WTC11 (cell line): ENCODE measurements at regions of chr1 and their contacts with region 1.

Region 1: DNA sequence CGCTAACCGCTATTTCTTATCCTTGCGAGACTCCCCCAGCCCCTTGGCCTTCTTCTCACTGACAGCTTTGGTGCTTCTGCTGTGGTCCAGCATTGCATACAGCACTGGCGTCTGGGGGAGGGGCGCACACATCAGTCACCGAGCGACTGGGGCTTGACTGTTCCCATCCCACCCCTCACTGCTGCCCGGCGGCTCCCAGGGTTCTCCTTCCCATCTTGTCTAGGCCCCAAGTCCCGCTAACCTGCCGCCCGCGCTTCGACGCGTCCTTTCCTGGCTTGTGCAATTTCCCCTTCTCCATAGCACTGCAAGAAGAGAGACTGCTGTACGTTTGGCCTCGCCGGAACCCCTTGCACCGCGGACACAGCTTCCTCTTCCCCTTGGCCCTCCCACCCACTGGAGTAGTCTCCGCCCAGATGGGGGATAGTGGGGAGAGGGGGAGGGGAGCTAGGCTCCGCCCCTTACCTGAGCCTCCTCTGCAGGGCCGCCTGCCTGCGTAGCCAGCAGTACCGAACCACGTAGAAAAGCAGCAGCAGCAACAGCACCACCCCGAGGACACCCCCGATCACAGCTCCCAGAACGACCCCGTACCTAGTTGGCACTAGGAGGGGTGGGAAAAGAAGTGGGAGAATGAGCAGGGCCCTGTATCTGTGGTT is 3.8 kb downstream of the MPZ start:
- DNase-seq: peak; percentile 98
- ATAC-seq: peak; percentile 97
- H3K4me3 Mint-ChIP-seq: peak overlapping the region; percentile 99
- H3K27ac Mint-ChIP-seq: peak overlapping the region; percentile 89
- H3K4me1 Mint-ChIP-seq: peaks cover 45% of the 10 kb centered on the region
- H3K27me3 Mint-ChIP-seq: no peaks in the 10 kb centered on the region
- CTCF ChIP-seq: no peak

Region 2: GRCh38 chr1:161059293-161059692 is 246.7 kb before region 1 on chr1:
- CTCF ChIA-PET with region 1: no interaction called
- POLR2A ChIA-PET with region 1: no interaction called
- DNase-seq: no peak
- ATAC-seq: no peak
- H3K4me3 Mint-ChIP-seq: no peak overlapping the region
- H3K27ac Mint-ChIP-seq: no peak overlapping the region
- H3K4me1 Mint-ChIP-seq: peaks cover 15% of the 10 kb centered on the region
- H3K27me3 Mint-ChIP-seq: no peaks in the 10 kb centered on the region
- CTCF ChIP-seq: no peak

Region 3: DNA sequence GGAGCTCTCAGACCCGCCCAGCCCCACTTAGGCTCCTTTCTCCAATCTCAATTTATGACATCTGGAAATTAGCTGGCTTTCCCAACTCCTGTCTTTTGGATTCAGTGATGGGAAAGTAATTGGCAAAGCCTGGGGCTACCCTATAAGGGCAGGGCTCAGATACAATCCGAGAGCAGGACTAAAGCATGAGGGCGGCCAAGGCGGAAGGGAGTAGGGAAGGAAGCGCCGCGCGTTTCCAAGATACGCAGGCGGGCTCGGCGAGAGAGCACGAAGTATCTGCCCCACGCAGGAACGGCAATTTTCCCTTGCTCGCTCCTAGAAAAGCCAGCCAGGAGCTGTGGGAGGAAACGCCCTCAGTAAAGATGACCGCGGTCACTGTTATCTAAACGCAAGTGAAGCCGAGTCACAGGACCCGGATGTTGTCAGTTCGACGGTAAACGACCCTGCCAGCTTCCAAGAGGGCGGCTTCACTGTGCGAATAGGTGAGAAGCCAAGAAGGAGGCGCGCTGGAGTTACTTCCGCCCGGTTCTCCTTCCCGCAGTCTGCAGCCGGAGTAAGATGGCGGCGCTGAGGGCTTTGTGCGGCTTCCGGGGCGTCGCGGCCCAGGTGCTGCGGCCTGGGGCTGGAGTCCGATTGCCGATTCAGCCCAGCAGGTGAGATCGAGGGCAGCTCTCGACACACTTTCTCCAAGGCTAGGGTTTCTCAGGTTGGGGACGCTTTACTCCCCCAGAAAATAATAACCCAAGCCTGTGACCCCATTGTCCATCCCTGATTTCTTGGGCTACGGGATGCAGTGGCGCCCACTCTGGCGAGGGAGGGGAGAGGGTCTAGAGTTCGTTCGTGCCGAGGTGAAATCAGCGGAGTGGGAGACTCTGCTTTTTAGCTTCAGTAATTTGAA is 103.9 kb before region 1 on chr1 and contains the start of gene NDUFS2:
- CTCF ChIA-PET with region 1: interaction called, 19 read pairs
- POLR2A ChIA-PET with region 1: interaction called, 5 read pairs
- DNase-seq: peak; percentile 97
- ATAC-seq: peak; percentile 80
- H3K4me3 Mint-ChIP-seq: peak within 1 kb of the TSS; percentile 91
- H3K27ac Mint-ChIP-seq: peak within 1 kb of the TSS; percentile 96
- H3K4me1 Mint-ChIP-seq: peaks cover 59% of the 10 kb centered on the region
- H3K27me3 Mint-ChIP-seq: no peaks in the 10 kb centered on the region
- CTCF ChIP-seq: no peak
- total RNA-seq, gene NDUFS2: 105 to 108 TPM (median 105 TPM) in 3 replicates

Region 4: GRCh38 chr1:161258439-161259344 is 47.3 kb before region 1 on chr1 and contains the start of gene PCP4L1:
- CTCF ChIA-PET with region 1: interaction called, 14 read pairs
- POLR2A ChIA-PET with region 1: interaction called, 6 read pairs
- DNase-seq: peak; percentile 87
- ATAC-seq: peak; percentile 97
- H3K4me3 Mint-ChIP-seq: peak within 1 kb of the TSS; percentile 65
- H3K27ac Mint-ChIP-seq: no peak within 1 kb of the TSS
- H3K4me1 Mint-ChIP-seq: peaks cover 22% of the 10 kb centered on the region
- H3K27me3 Mint-ChIP-seq: peaks cover 70% of the 10 kb centered on the region
- CTCF ChIP-seq: no peak
- total RNA-seq, gene PCP4L1: 0.92 to 1.2 TPM (median 1.1 TPM) in 3 replicates

Region 5: DNA sequence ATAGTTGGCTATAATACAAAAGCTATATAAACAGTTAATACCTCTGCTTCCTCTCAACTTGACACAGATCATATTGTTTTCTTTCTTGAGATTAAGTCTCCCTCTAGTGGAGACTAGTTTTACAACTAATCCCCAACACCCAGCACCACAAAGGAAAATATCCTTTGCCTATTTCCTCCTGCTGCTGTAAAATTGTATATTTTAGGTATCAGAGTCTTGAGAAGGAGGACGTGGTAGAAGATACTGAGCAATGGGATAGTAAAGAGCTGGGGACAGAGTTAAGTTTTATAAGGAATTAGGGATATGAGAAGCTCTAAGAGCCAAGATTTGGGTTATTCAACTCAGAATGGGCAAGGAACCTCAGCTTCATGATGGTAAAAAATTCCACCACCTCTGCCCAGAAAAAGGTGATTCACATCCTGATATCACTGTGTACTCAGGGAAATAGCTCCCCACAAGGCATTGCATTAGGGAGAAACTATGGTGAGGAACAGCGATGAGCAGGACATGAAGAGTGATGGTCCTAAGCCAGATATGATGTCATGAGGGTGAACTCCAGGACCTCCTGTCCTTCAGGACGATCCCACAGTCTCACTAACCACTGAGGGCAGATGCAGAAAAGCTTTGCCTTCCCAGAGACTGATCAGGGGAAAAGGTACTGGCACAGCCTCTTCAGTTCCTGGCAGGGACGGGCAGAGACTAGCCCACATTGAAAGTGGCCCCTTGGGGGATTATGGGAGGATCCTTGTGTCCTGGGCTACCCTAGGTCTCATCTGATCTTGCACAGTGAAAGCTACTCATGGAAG is 76.4 kb after region 1 on chr1:
- CTCF ChIA-PET with region 1: interaction called, 22 read pairs
- POLR2A ChIA-PET with region 1: no interaction called
- DNase-seq: no peak
- ATAC-seq: peak; percentile 62
- H3K4me3 Mint-ChIP-seq: no peak overlapping the region
- H3K27ac Mint-ChIP-seq: no peak overlapping the region
- H3K4me1 Mint-ChIP-seq: peaks cover 16% of the 10 kb centered on the region
- H3K27me3 Mint-ChIP-seq: no peaks in the 10 kb centered on the region
- CTCF ChIP-seq: peak; percentile 36; the same call in 1 of the 2 replicates